ENCODE measurements at regions of chr4 and their contacts with region 1.

Region 1: DNA sequence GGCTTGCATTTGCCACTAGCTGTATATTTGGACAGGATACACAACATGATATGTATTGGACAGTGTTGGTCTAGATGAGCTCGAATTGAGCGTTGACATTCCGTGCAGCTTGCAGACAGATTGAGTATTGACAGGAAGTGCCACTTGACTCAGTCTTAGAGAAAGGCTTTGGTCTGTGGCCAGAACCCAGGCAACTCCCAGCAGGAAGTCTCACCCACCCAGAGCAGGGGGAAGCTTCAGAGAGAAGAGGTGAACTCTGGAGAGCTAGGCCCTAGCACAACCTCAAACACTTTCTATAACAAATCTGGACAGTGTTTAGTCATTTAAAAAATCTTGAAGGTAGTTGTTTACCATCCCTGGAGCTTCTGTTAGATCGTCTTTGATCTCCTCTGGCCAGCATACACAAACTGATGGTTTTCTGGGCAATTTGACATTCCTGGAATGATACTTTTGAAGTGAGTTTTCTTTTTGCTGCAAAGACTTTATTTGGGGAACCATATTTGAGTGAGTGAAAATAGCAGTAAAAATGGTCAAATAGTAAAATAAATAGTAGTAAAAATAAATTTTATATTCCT is 280.4 kb downstream of the FBXW7 start:
- DNase-seq: no peak
- ATAC-seq: peak; percentile 37

Region 2: GRCh38 chr4:152161676-152162330 is 93.7 kb before region 1 on chr4:
- intact Hi-C with region 1: no loop called
- DNase-seq: no peak
- ATAC-seq: peak; percentile 43

Region 3: GRCh38 chr4:152209772-152210493 is 45.6 kb before region 1 on chr4:
- intact Hi-C with region 1: loop called (anchors 5 kb)
- DNase-seq: no peak
- ATAC-seq: no peak

Measured in Right ventricle myocardium inferior (tissue), 1 donor.